Gastrocnemius medialis (tissue), 4 donors: ENCODE measurements at regions of chr15 and their contacts with region 1.

Region 1: GRCh38 chr15:96356494-96357455 is 26.3 kb downstream of the NR2F2 start:
- DNase-seq: peak in 1 of 2 donors; percentile 49
- ATAC-seq: peak; percentile 68 to 72
- H3K4me3 ChIP-seq: peak overlapping the region; percentile 63 to 90 (median 80)
- H3K27ac ChIP-seq: peak overlapping the region; percentile 62 to 96 (median 80)
- H3K4me1 ChIP-seq: peaks cover 7 to 29% of the 10 kb centered on the region in 2 donors
- H3K27me3 ChIP-seq: peaks cover 41 to 56% (median 50%) of the 10 kb centered on the region in 3 donors
- CTCF ChIP-seq: peak; percentile 93 to 99 (median 97)
- POLR2A ChIP-seq: no peak

Region 2: GRCh38 chr15:96409215-96410138 is 52.7 kb after region 1 on chr15:
- in situ Hi-C with region 1: no loop called
- intact Hi-C with region 1: loop called (anchors 5 kb)
- DNase-seq: no peak
- ATAC-seq: peak in 1 of 2 donors; percentile 36
- H3K4me3 ChIP-seq: peak overlapping the region; percentile 38 to 61 (median 44)
- H3K27ac ChIP-seq: no peak overlapping the region
- H3K4me1 ChIP-seq: peaks cover 7 to 8% of the 10 kb centered on the region in 2 donors
- H3K27me3 ChIP-seq: peaks cover 71 to 81% (median 74%) of the 10 kb centered on the region in 3 donors
- CTCF ChIP-seq: no peak
- POLR2A ChIP-seq: no peak

Region 3: DNA sequence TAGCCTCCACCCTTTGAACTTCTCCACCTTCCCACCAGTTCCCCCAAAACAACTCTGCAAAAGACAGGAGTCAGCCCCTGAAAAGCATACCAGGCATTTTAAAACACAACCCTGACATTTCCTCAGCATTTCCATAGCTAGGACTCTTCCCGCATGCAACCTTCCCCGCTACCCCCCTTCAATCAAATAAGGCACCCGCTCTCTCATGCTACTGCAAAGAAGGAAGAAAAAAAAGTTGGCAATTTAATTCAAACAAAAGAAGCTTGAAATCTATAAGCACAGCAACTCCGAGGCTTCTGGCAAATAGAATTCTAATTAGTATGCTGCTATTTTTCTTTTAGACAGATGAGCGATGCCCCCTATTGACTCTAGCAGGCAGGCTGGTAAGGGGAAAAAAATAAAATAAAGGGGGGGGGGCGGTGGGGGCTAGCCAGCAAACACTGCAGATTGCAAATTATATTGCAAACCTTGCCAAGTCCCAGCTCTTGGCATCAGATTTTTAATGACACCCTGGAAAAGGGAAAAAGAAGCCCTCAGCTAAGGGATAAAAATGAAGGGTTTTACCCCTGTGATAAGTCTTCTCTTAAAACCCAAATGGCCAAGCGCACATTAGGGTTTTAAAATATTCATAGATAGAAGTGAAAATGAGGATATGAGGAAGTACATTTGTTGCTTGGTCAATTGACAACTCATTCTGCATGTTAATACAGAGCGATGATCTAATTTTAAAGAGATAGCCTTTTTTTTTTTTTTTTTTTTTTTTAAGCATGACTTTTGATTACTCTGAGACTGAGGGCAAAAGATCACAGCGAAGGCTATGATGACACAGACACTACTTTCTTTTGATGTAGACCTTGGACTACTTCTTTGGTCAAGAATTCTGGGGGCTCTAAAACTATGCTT is 229.0 kb after region 1 on chr15:
- in situ Hi-C with region 1: loop called in 3 of 4 experiments (anchors 10 to 25 kb)
- intact Hi-C with region 1: loop called (anchors 5 kb)
- DNase-seq: no peak
- ATAC-seq: no peak
- H3K4me3 ChIP-seq: no peak overlapping the region
- H3K27ac ChIP-seq: no peak overlapping the region
- H3K4me1 ChIP-seq: no peaks in the 10 kb centered on the region
- H3K27me3 ChIP-seq: no peaks in the 10 kb centered on the region
- CTCF ChIP-seq: peak in 2 of 5 experiments; percentile 20 to 31
- POLR2A ChIP-seq: no peak

Region 4: GRCh38 chr15:96893159-96893906 is 536.6 kb after region 1 on chr15:
- in situ Hi-C with region 1: loop called in 1 of 4 experiments (anchors 25 kb)
- intact Hi-C with region 1: loop called (anchors 5 kb)
- DNase-seq: no peak
- ATAC-seq: no peak
- H3K4me3 ChIP-seq: no peak overlapping the region
- H3K27ac ChIP-seq: no peak overlapping the region
- H3K4me1 ChIP-seq: no peaks in the 10 kb centered on the region
- H3K27me3 ChIP-seq: no peaks in the 10 kb centered on the region
- CTCF ChIP-seq: peak in 1 of 5 experiments; percentile 36
- POLR2A ChIP-seq: no peak

Region 5: DNA sequence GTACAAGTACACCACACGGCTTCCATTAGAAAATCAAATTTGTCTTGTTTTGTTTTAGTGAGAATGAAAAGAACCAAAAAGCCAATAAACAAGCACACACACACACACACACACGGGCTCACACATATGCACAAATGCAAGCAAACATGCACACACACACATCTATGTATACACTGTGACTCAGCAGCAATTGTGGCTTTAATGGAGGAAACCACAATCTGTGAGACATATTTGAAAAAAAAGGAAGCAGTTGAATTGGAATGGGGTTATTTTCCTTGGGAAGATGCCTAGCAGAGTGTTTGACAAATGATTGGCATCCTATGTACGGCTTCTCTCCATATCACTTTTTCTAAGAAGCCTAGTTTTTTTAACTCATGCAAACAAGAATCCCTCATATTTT is 1402.6 kb after region 1 on chr15:
- in situ Hi-C with region 1: loop called in 2 of 4 experiments (anchors 25 kb)
- intact Hi-C with region 1: loop called (anchors 5 kb)
- DNase-seq: no peak
- ATAC-seq: no peak
- H3K4me3 ChIP-seq: no peak overlapping the region
- H3K27ac ChIP-seq: no peak overlapping the region
- H3K4me1 ChIP-seq: no peaks in the 10 kb centered on the region
- H3K27me3 ChIP-seq: no peaks in the 10 kb centered on the region
- CTCF ChIP-seq: no peak
- POLR2A ChIP-seq: no peak